HepG2 (cell line): ENCODE measurements at regions of chr14 and their contacts with region 1.

Region 1: GRCh38 chr14:61103481-61104339 is 122.7 kb downstream of the SLC38A6 start:
- DNase-seq: peak; percentile 78
- ATAC-seq: peak; percentile 20
- H3K4me3 ChIP-seq: peak overlapping the region; percentile 8 to 56 (median 38); a peak in 5 of 6 replicates
- H3K27ac ChIP-seq: peak overlapping the region; percentile 87
- H3K4me1 ChIP-seq: peaks cover 59% of the 10 kb centered on the region
- H3K27me3 ChIP-seq: no peaks in the 10 kb centered on the region
- CTCF ChIP-seq: no peak
- EP300 ChIP-seq: peak in 1 of 2 experiments; percentile 43; a peak in 1 of 4 replicates
- POLR2A ChIP-seq: 0 out of 4 replicates have a peak, but pooled peaks of 1 of the 2 experiments have one; percentile 2
- RAD21 ChIP-seq: no peak

Region 2: DNA sequence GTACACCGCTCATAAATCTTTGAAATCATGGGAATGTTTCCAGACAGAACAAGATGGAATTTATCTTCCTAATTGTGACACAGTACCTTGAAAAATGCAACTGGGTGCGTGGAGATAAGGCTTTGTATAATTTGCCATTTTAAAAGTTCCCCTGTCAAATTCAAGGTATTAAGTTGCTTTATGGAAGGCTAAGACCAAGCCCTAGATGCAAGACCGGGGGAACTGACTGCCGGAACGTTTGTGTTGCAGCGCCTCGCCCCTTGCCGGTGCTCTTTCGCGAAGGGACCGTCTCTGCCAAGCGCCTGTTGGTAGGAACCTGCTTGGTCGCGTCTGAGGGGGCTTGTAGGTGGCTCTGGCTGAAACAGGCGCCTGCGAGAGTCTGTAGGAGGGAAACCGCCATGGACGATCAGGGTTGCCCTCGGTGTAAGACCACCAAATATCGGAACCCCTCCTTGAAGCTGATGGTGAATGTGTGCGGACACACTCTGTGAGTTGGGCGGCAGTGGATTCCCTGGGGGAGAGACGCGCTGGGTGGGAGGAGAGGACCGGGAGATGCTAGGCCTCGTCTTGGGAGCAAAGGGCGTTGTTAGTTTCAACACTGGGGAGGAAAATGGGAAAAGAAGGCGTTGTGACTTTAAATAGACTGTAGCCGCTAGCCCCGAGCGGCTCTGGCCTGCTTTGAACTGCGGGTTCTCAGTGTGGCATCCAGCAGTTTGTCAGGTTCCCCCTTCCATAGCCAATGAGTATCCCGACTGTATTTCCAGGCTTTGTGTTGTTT is 369.1 kb before region 1 on chr14 and contains the start of gene MNAT1:
- CTCF ChIA-PET with region 1: no interaction called
- POLR2A ChIA-PET with region 1: no interaction called
- in situ Hi-C with region 1: no loop called
- intact Hi-C with region 1: loop called (anchors 5 kb)
- DNase-seq: peak; percentile 66
- ATAC-seq: peak; percentile 98
- H3K4me3 ChIP-seq: peak within 1 kb of the TSS; percentile 86 to 97 (median 95)
- H3K27ac ChIP-seq: peak within 1 kb of the TSS; percentile 84
- H3K4me1 ChIP-seq: peaks cover 22% of the 10 kb centered on the region
- H3K27me3 ChIP-seq: no peaks in the 10 kb centered on the region; a peak in 1 of 5 replicates
- CTCF ChIP-seq: peak; percentile 42
- EP300 ChIP-seq: no peak; a peak in 1 of 4 replicates
- POLR2A ChIP-seq: peak; percentile 84 to 87
- RAD21 ChIP-seq: peak; percentile 39
- total RNA-seq, gene MNAT1: 94.8 and 130 TPM in 2 replicates

Region 3: GRCh38 chr14:60980811-60981632 is 122.7 kb before region 1 on chr14 and contains the starts of genes SLC38A6 and TRMT5:
- CTCF ChIA-PET with region 1: no interaction called
- POLR2A ChIA-PET with region 1: interaction called, 14 read pairs
- in situ Hi-C with region 1: no loop called
- intact Hi-C with region 1: loop called (anchors 2 kb)
- DNase-seq: peak; percentile 91
- ATAC-seq: peak; percentile 97
- H3K4me3 ChIP-seq: peak within 1 kb of the TSS; percentile 62 to 93 (median 90)
- H3K27ac ChIP-seq: peak within 1 kb of the TSS; percentile 82
- H3K4me1 ChIP-seq: peaks cover 44% of the 10 kb centered on the region
- H3K27me3 ChIP-seq: no peaks in the 10 kb centered on the region; a peak in 1 of 5 replicates
- CTCF ChIP-seq: 0 out of 2 replicates have a peak, but pooled peaks have one; percentile 13
- EP300 ChIP-seq: peak; percentile 16 to 43; a peak in 2 of 4 replicates
- POLR2A ChIP-seq: peak; percentile 71 to 90
- RAD21 ChIP-seq: peak; percentile 19; the same call in 1 of the 2 replicates
- total RNA-seq, gene SLC38A6: 12.4 and 22.1 TPM in 2 replicates
- total RNA-seq, gene TRMT5: 16.0 and 26.0 TPM in 2 replicates

Region 4: GRCh38 chr14:61042220-61042619 is 61.5 kb before region 1 on chr14:
- CTCF ChIA-PET with region 1: no interaction called
- POLR2A ChIA-PET with region 1: no interaction called
- in situ Hi-C with region 1: no loop called
- intact Hi-C with region 1: loop called (anchors 1 kb)
- DNase-seq: peak; percentile 83
- ATAC-seq: peak; percentile 91
- H3K4me3 ChIP-seq: no peak overlapping the region
- H3K27ac ChIP-seq: no peak overlapping the region
- H3K4me1 ChIP-seq: peaks cover 28% of the 10 kb centered on the region
- H3K27me3 ChIP-seq: no peaks in the 10 kb centered on the region
- CTCF ChIP-seq: no peak
- EP300 ChIP-seq: peak in 1 of 2 experiments; percentile 83; a peak in 2 of 4 replicates
- POLR2A ChIP-seq: no peak
- RAD21 ChIP-seq: no peak

Region 5: GRCh38 chr14:61178226-61179060 is 74.7 kb after region 1 on chr14:
- CTCF ChIA-PET with region 1: no interaction called
- POLR2A ChIA-PET with region 1: interaction called, 9 read pairs
- in situ Hi-C with region 1: no loop called
- intact Hi-C with region 1: loop called (anchors 1 kb)
- DNase-seq: peak; percentile 85
- ATAC-seq: peak; percentile 86
- H3K4me3 ChIP-seq: peak overlapping the region; percentile 39 to 59 (median 43)
- H3K27ac ChIP-seq: peak overlapping the region; percentile 59
- H3K4me1 ChIP-seq: peaks cover 31% of the 10 kb centered on the region
- H3K27me3 ChIP-seq: no peaks in the 10 kb centered on the region
- CTCF ChIP-seq: no peak
- EP300 ChIP-seq: peak; percentile 7 to 67; a peak in 1 of 4 replicates
- POLR2A ChIP-seq: peak in 1 of 2 experiments; percentile 5; a peak in 1 of 4 replicates
- RAD21 ChIP-seq: no peak